ENCODE measurements at regions of chr1 and their contacts with region 1.

Region 1: GRCh38 chr1:204203318-204203717 is 7.0 kb upstream of the KISS1 start:
- DNase-seq: no peak

Region 2: GRCh38 chr1:204169858-204170257 is 33.5 kb before region 1 on chr1:
- intact Hi-C with region 1: loop called in 1 of 2 experiments (anchors 5 kb)
- DNase-seq: no peak

Measured in posterior vena cava (tissue), 2 donors.